ENCODE measurements at regions of chr7 and their contacts with region 1.

Region 1: DNA sequence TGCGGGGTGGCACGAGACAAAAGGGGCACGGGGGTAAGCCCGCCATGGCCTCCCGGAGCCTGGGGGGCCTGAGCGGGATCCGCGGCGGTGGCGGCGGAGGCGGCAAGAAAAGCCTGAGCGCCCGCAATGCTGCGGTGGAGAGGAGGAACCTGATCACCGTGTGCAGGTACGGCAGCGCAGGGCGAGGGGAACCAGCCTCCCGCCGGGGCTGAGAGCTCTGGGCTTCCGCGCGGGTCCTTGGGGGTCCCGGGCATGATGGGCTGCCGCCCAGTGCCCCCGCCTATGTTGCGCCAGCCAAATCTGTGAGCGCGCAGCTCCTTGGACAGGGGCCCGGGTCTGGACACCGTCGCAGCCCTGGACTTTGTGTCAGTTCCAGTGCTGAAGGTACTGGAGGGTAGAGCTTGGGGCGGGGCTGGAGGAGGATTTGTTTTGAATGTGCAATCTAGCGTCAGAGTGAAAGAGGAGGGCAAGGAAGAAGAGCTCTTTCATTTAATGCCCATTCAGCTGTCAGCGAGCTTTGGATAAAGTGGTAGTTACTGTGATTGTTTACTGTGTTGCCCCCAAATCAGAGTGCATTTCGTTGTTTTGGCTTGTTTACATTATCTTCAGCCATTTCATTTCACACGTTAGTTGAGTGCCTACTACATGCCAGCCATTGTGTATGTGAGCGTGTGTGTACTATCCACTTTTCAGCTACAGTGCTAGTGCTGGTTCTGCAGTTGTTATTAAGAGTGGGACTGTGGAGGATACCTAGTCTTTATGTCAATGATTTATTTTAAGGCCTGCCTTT is 777 bp downstream of the RUNDC3B start:
- DNase-seq: peak; percentile 1 to 61 (median 24)
- ATAC-seq: peak; percentile 15
- H3K4me3 ChIP-seq: peak overlapping the region; percentile 73 to 89
- H3K4me3 Mint-ChIP-seq: peak overlapping the region; percentile 80
- H3K27ac ChIP-seq: peak overlapping the region in 1 of 2 experiments; percentile 7
- H3K27ac Mint-ChIP-seq: peak overlapping the region; percentile 78
- H3K4me1 ChIP-seq: peaks cover 3% of the 10 kb centered on the region
- H3K4me1 Mint-ChIP-seq: peaks cover 12% of the 10 kb centered on the region
- H3K27me3 ChIP-seq: no peaks in the 10 kb centered on the region
- H3K27me3 Mint-ChIP-seq: no peaks in the 10 kb centered on the region
- CTCF ChIP-seq: no peak

Region 2: GRCh38 chr7:87345166-87345927 is 283.6 kb before region 1 on chr7 and contains the start of gene CROT:
- CTCF ChIA-PET with region 1: no interaction called
- POLR2A ChIA-PET with region 1: no interaction called
- intact Hi-C with region 1: loop called (anchors 1 to 10 kb)
- DNase-seq: peak; percentile 84 to 96 (median 94)
- ATAC-seq: peak; percentile 96
- H3K4me3 ChIP-seq: peak within 1 kb of the TSS; percentile 91 to 96
- H3K4me3 Mint-ChIP-seq: peak within 1 kb of the TSS; percentile 95
- H3K27ac ChIP-seq: peak within 1 kb of the TSS; percentile 87 to 89
- H3K27ac Mint-ChIP-seq: peak within 1 kb of the TSS; percentile 96
- H3K4me1 ChIP-seq: peaks cover 25% of the 10 kb centered on the region
- H3K4me1 Mint-ChIP-seq: peaks cover 50% of the 10 kb centered on the region
- H3K27me3 ChIP-seq: no peaks in the 10 kb centered on the region
- H3K27me3 Mint-ChIP-seq: no peaks in the 10 kb centered on the region
- CTCF ChIP-seq: no peak
- total RNA-seq, gene CROT: 5.3 to 7.2 TPM

Region 3: DNA sequence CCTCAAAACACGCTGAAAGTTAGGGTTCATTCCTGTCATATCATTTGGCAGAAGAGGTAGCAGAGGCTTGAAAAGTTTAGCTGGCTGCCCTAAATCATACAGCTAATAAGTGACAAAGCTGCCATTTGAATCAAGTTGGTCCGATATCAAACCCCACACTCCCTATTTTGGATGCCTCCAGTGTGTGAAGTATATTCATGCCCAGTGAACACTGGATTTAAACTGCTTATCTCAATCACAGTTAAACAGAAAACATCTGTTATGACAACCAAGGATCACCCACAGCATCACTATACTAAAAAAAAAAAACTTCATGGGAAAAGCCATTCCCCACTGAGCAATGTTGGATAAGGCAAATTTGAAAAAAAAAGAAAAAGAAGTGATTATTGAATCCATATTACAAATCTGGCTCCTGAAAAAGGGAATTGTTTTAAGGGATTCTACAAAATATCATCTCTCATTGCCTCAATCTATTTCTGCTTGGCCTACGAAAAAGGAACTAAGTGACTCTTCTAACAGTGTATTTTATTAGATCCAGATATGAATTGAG is 76.5 kb before region 1 on chr7:
- CTCF ChIA-PET with region 1: no interaction called
- POLR2A ChIA-PET with region 1: no interaction called
- intact Hi-C with region 1: no loop called
- DNase-seq: no peak
- ATAC-seq: no peak
- H3K4me3 ChIP-seq: no peak overlapping the region
- H3K4me3 Mint-ChIP-seq: no peak overlapping the region
- H3K27ac ChIP-seq: no peak overlapping the region
- H3K27ac Mint-ChIP-seq: no peak overlapping the region
- H3K4me1 ChIP-seq: no peaks in the 10 kb centered on the region
- H3K4me1 Mint-ChIP-seq: no peaks in the 10 kb centered on the region
- H3K27me3 ChIP-seq: no peaks in the 10 kb centered on the region
- H3K27me3 Mint-ChIP-seq: no peaks in the 10 kb centered on the region
- CTCF ChIP-seq: no peak

Region 4: GRCh38 chr7:87564289-87564963 is 64.5 kb before region 1 on chr7:
- CTCF ChIA-PET with region 1: no interaction called
- POLR2A ChIA-PET with region 1: no interaction called
- intact Hi-C with region 1: loop called in 1 of 2 experiments (anchors 5 kb)
- DNase-seq: peak in 7 of 9 experiments; percentile 3 to 59 (median 31)
- ATAC-seq: no peak
- H3K4me3 ChIP-seq: no peak overlapping the region
- H3K4me3 Mint-ChIP-seq: no peak overlapping the region
- H3K27ac ChIP-seq: no peak overlapping the region
- H3K27ac Mint-ChIP-seq: no peak overlapping the region
- H3K4me1 ChIP-seq: peaks cover 3% of the 10 kb centered on the region
- H3K4me1 Mint-ChIP-seq: peaks cover 10% of the 10 kb centered on the region
- H3K27me3 ChIP-seq: no peaks in the 10 kb centered on the region
- H3K27me3 Mint-ChIP-seq: no peaks in the 10 kb centered on the region
- CTCF ChIP-seq: peak; percentile 22

Region 5: GRCh38 chr7:87600130-87601124 is 28.5 kb before region 1 on chr7 and contains the start of gene ABCB1:
- CTCF ChIA-PET with region 1: interaction called, 3 read pairs
- POLR2A ChIA-PET with region 1: interaction called, 19 read pairs
- intact Hi-C with region 1: loop called in 1 of 2 experiments (anchors 1 kb)
- DNase-seq: peak; percentile 12 to 76 (median 60)
- ATAC-seq: peak; percentile 88
- H3K4me3 ChIP-seq: peak within 1 kb of the TSS; percentile 83 to 89
- H3K4me3 Mint-ChIP-seq: peak within 1 kb of the TSS; percentile 83
- H3K27ac ChIP-seq: peak within 1 kb of the TSS; percentile 71 to 77
- H3K27ac Mint-ChIP-seq: peak within 1 kb of the TSS; percentile 92
- H3K4me1 ChIP-seq: peaks cover 20% of the 10 kb centered on the region
- H3K4me1 Mint-ChIP-seq: peaks cover 36% of the 10 kb centered on the region
- H3K27me3 ChIP-seq: peaks cover 0 to 2% of the 10 kb centered on the region in 2 experiments
- H3K27me3 Mint-ChIP-seq: peaks cover 3% of the 10 kb centered on the region
- CTCF ChIP-seq: no peak
- total RNA-seq, gene ABCB1: 38.4 to 40.0 TPM

Region 6: GRCh38 chr7:87886875-87887274 is 257.9 kb after region 1 on chr7:
- CTCF ChIA-PET with region 1: no interaction called
- POLR2A ChIA-PET with region 1: no interaction called
- intact Hi-C with region 1: loop called in 1 of 2 experiments (anchors 5 kb)
- DNase-seq: peak in 2 of 9 experiments; percentile 50 to 63
- ATAC-seq: no peak
- H3K4me3 ChIP-seq: no peak overlapping the region
- H3K4me3 Mint-ChIP-seq: no peak overlapping the region
- H3K27ac ChIP-seq: no peak overlapping the region
- H3K27ac Mint-ChIP-seq: no peak overlapping the region
- H3K4me1 ChIP-seq: no peaks in the 10 kb centered on the region
- H3K4me1 Mint-ChIP-seq: peaks cover 9% of the 10 kb centered on the region
- H3K27me3 ChIP-seq: no peaks in the 10 kb centered on the region
- H3K27me3 Mint-ChIP-seq: no peaks in the 10 kb centered on the region
- CTCF ChIP-seq: peak; percentile 72

Region 7: GRCh38 chr7:87933945-87934698 is 305.1 kb after region 1 on chr7 and contains the start of gene ADAM22:
- CTCF ChIA-PET with region 1: interaction called, 3 read pairs
- POLR2A ChIA-PET with region 1: interaction called, 3 read pairs
- intact Hi-C with region 1: loop called in 1 of 2 experiments (anchors 1 kb)
- DNase-seq: peak; percentile 65 to 94 (median 85)
- ATAC-seq: peak; percentile 94
- H3K4me3 ChIP-seq: peak within 1 kb of the TSS; percentile 73 to 82
- H3K4me3 Mint-ChIP-seq: peak within 1 kb of the TSS; percentile 89
- H3K27ac ChIP-seq: peak within 1 kb of the TSS; percentile 32 to 71
- H3K27ac Mint-ChIP-seq: peak within 1 kb of the TSS; percentile 79
- H3K4me1 ChIP-seq: peaks cover 7% of the 10 kb centered on the region
- H3K4me1 Mint-ChIP-seq: peaks cover 11% of the 10 kb centered on the region
- H3K27me3 ChIP-seq: no peaks in the 10 kb centered on the region
- H3K27me3 Mint-ChIP-seq: no peaks in the 10 kb centered on the region
- CTCF ChIP-seq: no peak
- total RNA-seq, gene ADAM22: 1.1 to 1.7 TPM

Region 8: GRCh38 chr7:88219781-88220747 is 591.1 kb after region 1 on chr7 and contains the start of gene SRI:
- CTCF ChIA-PET with region 1: no interaction called
- POLR2A ChIA-PET with region 1: no interaction called
- intact Hi-C with region 1: loop called (anchors 1 to 10 kb)
- DNase-seq: peak; percentile 87 to 95 (median 92)
- ATAC-seq: peak; percentile 97
- H3K4me3 ChIP-seq: peak within 1 kb of the TSS; percentile 81 to 86
- H3K4me3 Mint-ChIP-seq: peak within 1 kb of the TSS; percentile 95
- H3K27ac ChIP-seq: peak within 1 kb of the TSS; percentile 73 to 83
- H3K27ac Mint-ChIP-seq: peak within 1 kb of the TSS; percentile 97
- H3K4me1 ChIP-seq: peaks cover 21% of the 10 kb centered on the region
- H3K4me1 Mint-ChIP-seq: peaks cover 34% of the 10 kb centered on the region
- H3K27me3 ChIP-seq: no peaks in the 10 kb centered on the region
- H3K27me3 Mint-ChIP-seq: no peaks in the 10 kb centered on the region
- CTCF ChIP-seq: peak; percentile 97
- total RNA-seq, gene SRI: 38.5 to 43.9 TPM